RWPE1 (cell line): ENCODE measurements at regions of chr7 and their contacts with region 1.

Region 1: GRCh38 chr7:106736508-106737201 is 75.7 kb upstream of the CCDC71L start:
- DNase-seq: peak; percentile 59
- H3K27ac ChIP-seq: no peak overlapping the region
- CTCF ChIP-seq: peak; percentile 29; the same call in 1 of the 2 replicates

Region 2: DNA sequence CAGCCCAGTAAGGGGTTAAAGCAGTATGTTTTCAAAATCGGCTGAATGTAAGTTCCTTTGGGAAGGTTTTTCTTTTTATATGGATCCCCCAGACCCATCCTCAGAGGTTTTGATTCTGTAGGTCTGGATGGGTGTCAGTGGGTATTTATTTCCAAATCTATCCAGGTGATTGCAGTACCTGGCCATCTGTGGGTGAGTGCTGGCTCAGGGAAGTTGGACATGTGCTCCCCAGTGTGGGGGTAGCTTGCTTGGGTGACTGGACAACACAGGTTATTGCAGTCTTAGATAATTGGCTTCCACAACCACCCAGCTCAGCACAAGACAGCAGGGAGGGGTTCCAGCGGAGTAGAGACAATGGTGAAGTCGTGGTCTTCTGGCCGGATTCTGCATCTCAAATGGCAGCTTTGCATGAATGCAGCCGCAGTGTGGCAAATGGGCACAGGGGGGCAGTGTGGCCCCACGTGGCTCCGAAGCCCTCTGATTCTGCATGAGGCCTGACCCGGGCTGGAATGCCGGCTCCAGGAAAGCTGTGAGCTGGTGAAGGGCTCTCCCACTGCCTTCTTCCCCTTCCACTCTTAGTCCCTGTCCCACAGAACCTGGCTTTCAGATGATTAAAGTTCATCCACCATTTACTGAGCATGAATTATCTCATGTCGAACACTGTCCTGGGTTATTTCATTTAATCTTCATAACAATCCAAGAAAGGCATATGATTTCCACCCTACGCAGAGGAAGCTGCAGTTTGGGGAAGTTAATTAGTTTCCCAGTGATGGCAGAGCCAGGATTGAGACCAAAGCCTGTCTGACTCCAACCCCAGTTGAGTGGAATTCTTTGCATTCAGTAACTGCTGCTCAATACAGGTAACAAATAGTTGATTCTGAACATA is 560.0 kb before region 1 on chr7:
- CTCF ChIA-PET with region 1: interaction called, 14 read pairs
- POLR2A ChIA-PET with region 1: no interaction called
- DNase-seq: peak; percentile 86
- H3K27ac ChIP-seq: no peak overlapping the region
- CTCF ChIP-seq: peak; percentile 99

Region 3: GRCh38 chr7:106542550-106543220 is 194.0 kb before region 1 on chr7:
- CTCF ChIA-PET with region 1: interaction called, 17 read pairs
- POLR2A ChIA-PET with region 1: no interaction called
- DNase-seq: peak; percentile 63
- H3K27ac ChIP-seq: no peak overlapping the region
- CTCF ChIP-seq: peak; percentile 42

Region 4: DNA sequence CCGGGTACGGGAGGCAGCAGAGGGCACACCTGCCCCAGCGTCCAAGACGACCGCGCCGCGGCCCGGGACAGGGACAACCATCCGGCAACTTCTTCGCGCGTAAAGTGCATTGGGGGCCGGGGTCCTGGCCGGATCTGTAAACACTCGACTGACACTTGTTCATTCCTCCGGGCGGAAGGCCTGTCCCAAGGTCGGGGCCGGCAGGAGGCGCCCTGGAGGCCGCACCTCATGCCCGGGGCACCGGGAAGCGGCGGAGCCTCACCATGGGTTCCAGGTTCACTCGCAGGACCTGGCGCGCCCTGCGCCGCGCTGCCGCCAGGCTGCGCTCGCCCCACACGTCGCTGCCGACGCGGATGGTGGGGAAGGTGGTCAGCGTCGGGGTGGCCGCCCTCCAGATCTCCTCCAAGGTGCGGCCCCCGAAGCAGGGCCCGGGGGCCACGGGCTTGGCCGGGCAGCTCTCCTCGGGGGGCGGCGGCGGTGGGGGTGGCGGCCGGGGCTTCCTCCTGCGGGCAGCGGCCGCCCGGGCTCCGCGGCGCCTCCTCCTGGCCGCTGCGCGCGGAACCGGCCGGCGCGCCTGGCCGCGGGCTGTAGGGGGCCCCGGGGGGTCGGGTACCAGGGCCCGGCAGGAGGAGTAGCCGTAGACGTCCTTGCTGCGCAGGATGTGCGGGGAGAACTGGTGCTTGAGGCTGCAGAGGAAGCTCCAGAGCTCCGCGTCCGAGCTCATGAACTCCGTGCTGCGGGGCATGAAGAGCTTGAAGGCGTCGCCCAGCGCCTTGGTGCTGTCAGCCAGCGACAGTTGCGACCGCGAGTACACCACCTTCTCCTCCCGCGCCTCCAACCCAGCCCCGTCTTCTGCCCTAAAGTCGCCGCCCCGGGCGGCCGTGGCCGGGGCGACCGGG is 76.4 kb before region 1 on chr7:
- CTCF ChIA-PET with region 1: interaction called, 30 read pairs
- POLR2A ChIA-PET with region 1: no interaction called
- DNase-seq: peak; percentile 81
- H3K27ac ChIP-seq: peak overlapping the region; percentile 74
- CTCF ChIP-seq: peak; percentile 98

Region 5: DNA sequence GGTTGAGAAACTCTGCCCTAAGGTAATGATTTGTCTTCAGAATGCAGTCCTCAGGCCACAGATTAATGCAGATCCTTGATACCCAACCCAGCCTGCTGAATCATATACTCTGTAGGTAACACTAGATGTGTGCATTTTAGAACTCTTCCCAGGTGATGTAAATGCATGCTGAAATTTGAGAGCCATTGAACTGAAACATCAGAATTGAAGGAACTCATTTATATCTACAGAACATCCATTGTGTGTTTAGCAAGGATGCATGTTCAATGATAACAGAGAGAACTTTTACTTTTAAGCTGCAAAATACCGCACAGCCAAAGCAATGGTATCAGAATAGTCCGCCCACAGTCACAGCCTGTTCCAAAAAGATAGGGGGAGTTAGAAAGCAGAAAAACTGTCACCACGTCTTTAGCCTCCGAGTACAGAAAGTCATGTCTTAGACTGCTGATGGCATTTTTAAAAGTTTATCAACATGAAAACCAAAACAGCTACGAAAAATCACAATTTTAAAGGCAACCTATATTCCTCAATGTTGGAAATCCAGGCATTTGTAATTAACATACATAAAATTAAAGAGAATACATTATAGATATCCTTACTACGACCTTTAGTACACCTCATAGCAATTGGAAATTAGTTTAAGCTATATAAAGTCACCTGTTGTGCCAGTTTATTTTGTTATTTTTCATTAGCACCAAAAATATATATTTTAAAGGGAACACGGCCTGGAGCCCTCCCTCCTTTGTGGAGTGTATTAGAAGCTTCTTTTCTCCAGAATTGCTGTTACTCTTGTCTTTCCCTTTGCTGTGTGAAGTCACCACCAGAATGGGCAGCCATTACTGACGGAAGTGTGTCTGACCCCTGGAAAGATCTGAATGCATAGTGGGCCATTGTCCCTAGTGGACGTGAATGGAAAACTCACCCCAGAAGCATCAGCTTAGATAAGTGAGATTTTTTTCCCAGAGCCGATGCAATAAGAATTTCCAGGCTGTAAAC is 242.1 kb after region 1 on chr7:
- CTCF ChIA-PET with region 1: no interaction called
- POLR2A ChIA-PET with region 1: no interaction called
- DNase-seq: no peak
- H3K27ac ChIP-seq: no peak overlapping the region
- CTCF ChIP-seq: no peak